HEK293T (cell line): ENCODE measurements at regions of chr6 and their contacts with region 1.

Region 1: GRCh38 chr6:28489366-28490204 is 26.0 kb downstream of the GPX6 start:
- DNase-seq: peak; percentile 72

Region 2: DNA sequence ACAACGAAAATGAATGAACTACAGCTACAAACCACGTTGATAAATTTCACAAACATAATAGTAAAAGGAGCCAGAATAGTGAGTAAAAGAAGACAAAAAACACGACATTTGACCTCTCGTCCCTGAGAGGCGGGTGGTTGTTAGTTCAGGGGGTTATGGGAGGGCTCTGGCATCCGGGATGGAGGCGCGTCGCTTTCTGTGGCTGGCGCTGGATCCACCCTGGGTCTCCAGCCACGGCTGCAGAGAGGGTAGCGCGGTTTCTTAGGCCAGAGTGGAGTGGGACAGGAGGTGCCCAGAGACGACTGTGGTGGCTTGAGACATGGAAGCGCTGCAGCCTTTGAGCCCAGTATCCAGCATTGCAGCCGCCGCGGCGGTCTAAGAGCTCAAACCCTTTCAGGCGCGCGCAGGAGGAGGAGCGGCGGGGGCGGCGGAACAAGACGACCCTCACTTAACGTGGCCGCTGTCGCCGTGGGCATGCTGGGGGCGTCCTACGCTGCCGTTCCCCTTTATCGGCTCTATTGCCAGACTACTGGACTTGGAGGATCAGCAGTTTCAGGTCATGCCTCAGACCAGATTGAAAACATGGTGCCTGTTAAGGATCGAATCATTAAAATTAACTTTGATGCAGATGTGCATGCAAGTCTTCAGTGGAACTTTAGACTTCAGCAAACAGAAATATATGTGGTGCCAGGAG is 42.6 kb before region 1 on chr6:
- CTCF ChIA-PET with region 1: no interaction called
- POLR2A ChIA-PET with region 1: interaction called, 12 read pairs
- DNase-seq: peak; percentile 29

Region 3: DNA sequence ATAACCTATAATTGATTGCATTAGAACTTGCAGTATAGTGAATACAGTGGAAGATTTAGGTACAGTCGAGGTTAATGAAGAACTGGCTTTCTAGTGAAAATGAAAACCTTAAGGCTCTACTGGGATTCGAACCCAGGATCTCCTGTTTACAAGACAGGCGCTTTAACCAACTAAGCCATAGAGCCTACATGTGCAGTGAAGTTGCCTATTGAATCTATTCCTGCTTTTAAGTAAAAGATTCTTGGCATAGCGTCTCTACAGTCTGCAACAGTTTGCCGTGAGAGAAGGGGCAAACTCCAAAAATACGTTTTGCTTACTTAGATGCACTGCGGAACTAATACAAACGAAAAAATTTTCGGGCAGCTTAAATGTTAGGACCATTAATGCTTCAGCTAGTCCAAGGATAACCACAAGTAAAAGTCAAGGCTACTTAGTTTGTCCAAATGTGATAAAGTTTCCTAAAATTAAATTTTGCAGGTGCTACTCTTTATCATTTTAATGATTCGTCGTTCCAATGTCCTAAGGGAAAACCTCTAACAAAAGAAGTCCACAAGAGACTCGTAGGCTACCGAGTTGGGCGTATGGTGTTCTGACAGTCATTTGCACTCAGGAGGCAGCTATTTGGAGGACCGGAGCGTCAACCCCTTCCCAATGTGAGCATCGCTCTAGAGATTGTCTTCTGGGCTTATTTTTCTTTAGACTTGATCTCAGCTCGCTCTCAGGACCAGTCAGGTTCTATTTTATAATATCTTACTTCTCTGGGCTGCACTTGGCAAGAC is 15.0 kb before region 1 on chr6:
- CTCF ChIA-PET with region 1: no interaction called
- POLR2A ChIA-PET with region 1: interaction called, 29 read pairs
- DNase-seq: peak; percentile 56

Region 4: GRCh38 chr6:28542440-28543296 is 53.1 kb after region 1 on chr6:
- CTCF ChIA-PET with region 1: no interaction called
- POLR2A ChIA-PET with region 1: interaction called, 11 read pairs
- DNase-seq: peak; percentile 81